ENCODE measurements at regions of chr17 and their contacts with region 1.

Region 1: GRCh38 chr17:52297230-52298010 is 138.9 kb upstream of the CA10 start:
- DNase-seq: no peak
- ATAC-seq: peak; percentile 67 to 87 (median 78)
- H3K4me3 ChIP-seq: no peak overlapping the region
- H3K27ac ChIP-seq: no peak overlapping the region
- H3K4me1 ChIP-seq: no peaks in the 10 kb centered on the region
- H3K27me3 ChIP-seq: no peaks in the 10 kb centered on the region
- CTCF ChIP-seq: peak; percentile 45 to 72 (median 57)
- POLR2A ChIP-seq: no peak

Region 2: GRCh38 chr17:52170963-52171572 is 126.4 kb before region 1 on chr17:
- intact Hi-C with region 1: loop called in 1 of 2 experiments (anchors 10 kb)
- DNase-seq: peak in 2 of 3 donors; percentile 34 to 60
- ATAC-seq: peak; percentile 73 to 89 (median 80)
- H3K4me3 ChIP-seq: no peak overlapping the region
- H3K27ac ChIP-seq: no peak overlapping the region
- H3K4me1 ChIP-seq: no peaks in the 10 kb centered on the region
- H3K27me3 ChIP-seq: no peaks in the 10 kb centered on the region
- CTCF ChIP-seq: peak; percentile 68 to 82 (median 71)
- POLR2A ChIP-seq: no peak

Measured in right lobe of liver (tissue), 6 donors.